Lower leg skin (tissue), 4 donors: ENCODE measurements at regions of chr5 and their contacts with region 1.

Region 1: GRCh38 chr5:38193015-38193581 is 65.3 kb upstream of the EGFLAM start:
- DNase-seq: peak; percentile 49 to 91
- H3K4me3 ChIP-seq: no peak overlapping the region
- CTCF ChIP-seq: peak in 1 of 3 donors; percentile 51
- POLR2A ChIP-seq: no peak

Region 2: GRCh38 chr5:37412515-37413277 is 780.4 kb before region 1 on chr5:
- intact Hi-C with region 1: loop called (anchors 5 kb)
- DNase-seq: peak in 1 of 2 donors; percentile 44
- H3K4me3 ChIP-seq: no peak overlapping the region
- CTCF ChIP-seq: peak in 1 of 3 donors; percentile 48
- POLR2A ChIP-seq: no peak

Region 3: DNA sequence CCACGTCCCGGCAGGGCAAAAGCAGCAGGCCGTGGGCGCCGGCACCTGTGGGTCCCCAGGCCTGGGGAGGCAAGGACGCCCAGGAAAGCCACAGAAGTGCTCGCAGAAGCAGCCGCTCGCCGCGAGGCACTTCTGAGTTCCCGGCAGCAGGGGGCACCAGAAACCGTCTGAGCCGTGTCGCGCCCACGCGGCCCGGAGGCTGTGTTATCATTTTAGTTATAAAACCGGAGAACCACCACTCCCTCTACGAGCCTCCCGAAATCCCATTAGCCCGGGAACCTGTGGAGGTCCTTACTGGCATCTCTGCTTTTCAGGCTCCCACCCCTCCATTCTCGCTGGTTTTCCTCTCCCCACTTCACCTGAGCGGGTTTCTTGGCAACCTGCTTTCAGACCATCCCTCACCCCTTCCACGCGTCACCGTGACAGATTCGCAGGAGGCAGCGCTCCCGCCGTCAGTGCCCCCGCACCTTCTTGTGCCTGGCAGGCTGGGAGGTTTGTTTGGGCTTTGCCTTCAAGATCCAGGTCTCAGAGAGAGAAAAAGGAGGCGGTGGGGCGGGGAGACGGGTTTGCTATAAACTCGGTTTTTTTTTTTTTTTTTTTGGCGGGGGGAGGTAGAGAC is 355.6 kb before region 1 on chr5:
- intact Hi-C with region 1: loop called (anchors 5 kb)
- DNase-seq: peak; percentile 55 to 94
- H3K4me3 ChIP-seq: no peak overlapping the region
- CTCF ChIP-seq: peak in 1 of 3 donors; percentile 28
- POLR2A ChIP-seq: no peak